ENCODE measurements at regions of chr5 and their contacts with region 1.

Region 1: DNA sequence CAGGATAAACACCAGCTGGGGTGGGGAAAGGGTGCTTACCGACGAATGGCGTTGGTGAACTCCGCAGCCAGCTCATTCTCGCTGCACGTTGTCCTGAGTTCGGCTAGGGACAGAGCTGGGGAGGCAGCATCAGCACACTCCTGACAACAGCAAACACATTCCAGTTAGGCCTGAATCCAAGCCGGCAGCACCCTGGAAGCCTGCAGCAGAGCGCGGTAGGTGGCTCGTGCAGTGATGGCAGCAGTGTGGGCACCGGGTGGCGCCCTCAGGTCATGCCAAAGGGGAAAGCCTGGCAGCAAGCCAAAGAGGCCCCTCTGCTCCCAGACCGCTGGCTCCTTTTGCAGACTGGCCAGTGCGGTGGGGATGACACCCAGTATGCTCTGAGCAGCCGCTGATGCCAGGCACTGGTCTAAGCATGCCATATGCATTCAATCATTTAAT is 66.9 kb downstream of the DCP2 start:
- DNase-seq: peak; percentile 82

Region 2: GRCh38 chr5:112811023-112811422 is 232.5 kb before region 1 on chr5:
- intact Hi-C with region 1: no loop called
- DNase-seq: no peak

Region 3: GRCh38 chr5:113090336-113091106 is 47.0 kb after region 1 on chr5:
- intact Hi-C with region 1: loop called (anchors 5 kb)
- DNase-seq: no peak

Region 4: GRCh38 chr5:113330533-113331208 is 287.2 kb after region 1 on chr5:
- intact Hi-C with region 1: loop called (anchors 5 kb)
- DNase-seq: no peak

Measured in cardiac septum (tissue), 1 donor.